Sigmoid colon (tissue), 7 donors: ENCODE measurements at regions of chrX and their contacts with region 1.

Region 1: GRCh38 chrX:18425199-18426003 is at the start of gene CDKL5:
- DNase-seq: peak; percentile 98
- H3K4me3 ChIP-seq: peak within 1 kb of the TSS; percentile 72 to 83 (median 78)
- H3K27ac ChIP-seq: peak within 1 kb of the TSS; percentile 73 to 84 (median 80)
- H3K4me1 ChIP-seq: no peaks in the 10 kb centered on the region
- H3K27me3 ChIP-seq: no peaks in the 10 kb centered on the region
- CTCF ChIP-seq: no peak
- EP300 ChIP-seq: no peak
- POLR2A ChIP-seq: peak; percentile 22 to 38
- total RNA-seq, gene CDKL5: 5.2 to 8.9 (median 5.3) TPM

Region 2: DNA sequence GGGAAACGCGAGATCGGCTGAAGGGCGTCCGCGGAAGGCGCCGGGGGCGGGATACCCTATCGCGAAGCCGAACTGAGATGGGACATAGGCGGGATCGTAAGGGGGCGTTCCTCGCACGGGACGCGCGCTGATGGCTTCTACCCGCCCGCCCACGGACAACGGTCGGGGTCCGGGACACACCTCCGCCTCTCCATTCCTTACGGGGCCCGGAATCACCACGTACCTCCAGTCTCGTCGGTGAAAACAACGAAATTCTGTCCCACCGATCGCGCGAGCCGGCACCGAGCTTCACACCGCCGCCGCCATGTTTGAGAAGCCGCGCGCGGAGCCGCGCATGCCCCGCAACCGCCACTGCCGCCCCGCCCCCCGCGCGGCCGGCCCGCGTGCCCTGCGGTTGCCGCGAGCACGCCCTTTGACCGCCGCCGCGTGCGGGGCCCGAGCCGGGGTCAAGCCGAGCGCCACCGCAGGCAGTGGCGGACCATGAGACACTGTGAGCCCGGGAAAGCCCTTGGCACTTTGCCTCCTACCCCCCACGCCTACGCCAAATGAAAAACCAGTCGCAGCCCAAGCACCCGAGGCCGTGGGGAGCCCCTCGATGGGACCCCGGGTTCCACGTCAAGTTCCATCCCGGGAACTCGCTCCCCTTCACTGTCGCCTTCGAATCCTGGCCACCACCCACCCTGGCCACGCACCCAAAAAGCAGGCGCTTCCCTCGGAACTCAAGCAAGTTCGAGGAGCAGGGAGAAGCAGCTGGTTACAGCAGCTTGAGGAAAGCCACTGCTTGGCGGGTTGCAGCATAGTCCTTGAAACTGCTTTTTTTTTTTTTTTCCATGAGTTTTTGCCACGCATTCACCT is 70.8 kb before region 1 on chrX and contains the start of gene SCML2:
- intact Hi-C with region 1: no loop called
- DNase-seq: peak; percentile 69
- H3K4me3 ChIP-seq: peak within 1 kb of the TSS; percentile 42 to 60 (median 56)
- H3K27ac ChIP-seq: peak within 1 kb of the TSS; percentile 62 to 76 (median 72)
- H3K4me1 ChIP-seq: no peaks in the 10 kb centered on the region
- H3K27me3 ChIP-seq: no peaks in the 10 kb centered on the region
- CTCF ChIP-seq: no peak
- EP300 ChIP-seq: no peak
- POLR2A ChIP-seq: no peak
- total RNA-seq, gene SCML2: 1.9 to 5.6 (median 2.4) TPM

Region 3: GRCh38 chrX:18886344-18887161 is 461.2 kb after region 1 on chrX:
- intact Hi-C with region 1: loop called (anchors 5 kb)
- DNase-seq: peak; percentile 88
- H3K4me3 ChIP-seq: peak overlapping the region; percentile 17 to 41 (median 33)
- H3K27ac ChIP-seq: peak overlapping the region; percentile 69 to 72 (median 70)
- H3K4me1 ChIP-seq: peaks cover 0 to 21% (median 15%) of the 10 kb centered on the region in 4 donors
- H3K27me3 ChIP-seq: no peaks in the 10 kb centered on the region
- CTCF ChIP-seq: peak; percentile 33 to 61 (median 50)
- EP300 ChIP-seq: no peak
- POLR2A ChIP-seq: no peak

Region 4: GRCh38 chrX:18984381-18985185 is 559.2 kb after region 1 on chrX:
- intact Hi-C with region 1: loop called (anchors 5 kb)
- DNase-seq: peak; percentile 89
- H3K4me3 ChIP-seq: peak overlapping the region; percentile 47 to 74 (median 70)
- H3K27ac ChIP-seq: peak overlapping the region; percentile 86 to 90 (median 88)
- H3K4me1 ChIP-seq: peaks cover 0 to 11% (median 6%) of the 10 kb centered on the region in 4 donors
- H3K27me3 ChIP-seq: peaks cover 0 to 5% (median 0%) of the 10 kb centered on the region in 3 donors
- CTCF ChIP-seq: peak; percentile 54 to 66 (median 60)
- EP300 ChIP-seq: no peak
- POLR2A ChIP-seq: no peak